Heart left ventricle (tissue), 16 donors: ENCODE measurements at regions of chr22 and their contacts with region 1.

Region 1: GRCh38 chr22:41557401-41558240 is 3.2 kb upstream of the CSDC2 start:
- DNase-seq: peak; percentile 79 to 89 (median 88)
- ATAC-seq: peak; percentile 13 to 68 (median 52)
- H3K4me3 ChIP-seq: no peak overlapping the region
- H3K27ac ChIP-seq: peak overlapping the region in 11 of 12 donors; percentile 25 to 81 (median 64)
- H3K4me1 ChIP-seq: peaks cover 0 to 48% (median 18%) of the 10 kb centered on the region in 12 donors
- H3K27me3 ChIP-seq: peaks cover 0 to 5% (median 0%) of the 10 kb centered on the region in 9 donors
- CTCF ChIP-seq: no peak
- POLR2A ChIP-seq: no peak

Region 2: GRCh38 chr22:41517172-41518047 is 40.2 kb before region 1 on chr22:
- intact Hi-C with region 1: no loop called
- DNase-seq: peak in 3 of 5 donors; percentile 63 to 74 (median 70)
- ATAC-seq: peak in 3 of 4 donors; percentile 37 to 40 (median 38)
- H3K4me3 ChIP-seq: no peak overlapping the region
- H3K27ac ChIP-seq: peak overlapping the region in 9 of 12 donors; percentile 16 to 89 (median 54)
- H3K4me1 ChIP-seq: peaks cover 0 to 48% (median 18%) of the 10 kb centered on the region in 12 donors
- H3K27me3 ChIP-seq: no peaks in the 10 kb centered on the region
- CTCF ChIP-seq: peak; percentile 81 to 93 (median 88)
- POLR2A ChIP-seq: no peak

Region 3: DNA sequence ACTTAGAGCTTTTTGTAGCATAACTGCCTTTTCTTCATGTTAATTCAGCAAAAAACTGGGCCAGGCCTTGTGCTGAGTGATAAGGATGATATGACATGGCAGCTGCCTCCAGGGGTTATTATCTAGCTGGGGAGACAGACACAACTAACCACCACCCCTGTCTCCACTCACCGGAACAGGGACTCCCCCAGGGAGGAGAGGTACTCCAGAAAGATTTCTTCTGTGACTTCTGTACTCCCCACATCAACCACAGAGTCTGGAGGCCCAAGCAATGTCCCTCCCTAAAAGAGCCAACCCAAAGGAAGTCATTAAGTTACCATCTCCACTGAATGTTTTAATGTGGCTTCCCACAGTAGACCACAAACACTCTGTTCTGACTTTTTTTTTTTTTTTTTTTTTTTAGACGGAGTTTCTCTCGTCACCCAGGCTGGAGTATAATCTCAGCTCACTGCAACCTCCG is 46.3 kb after region 1 on chr22:
- intact Hi-C with region 1: loop called in 1 of 10 experiments (anchors 10 kb)
- DNase-seq: no peak
- ATAC-seq: no peak
- H3K4me3 ChIP-seq: no peak overlapping the region
- H3K27ac ChIP-seq: no peak overlapping the region
- H3K4me1 ChIP-seq: peaks cover 0 to 8% (median 0%) of the 10 kb centered on the region in 12 donors
- H3K27me3 ChIP-seq: no peaks in the 10 kb centered on the region
- CTCF ChIP-seq: no peak
- POLR2A ChIP-seq: no peak